HAP-1 (cell line): ENCODE measurements at regions of chr5 and their contacts with region 1.

Region 1: DNA sequence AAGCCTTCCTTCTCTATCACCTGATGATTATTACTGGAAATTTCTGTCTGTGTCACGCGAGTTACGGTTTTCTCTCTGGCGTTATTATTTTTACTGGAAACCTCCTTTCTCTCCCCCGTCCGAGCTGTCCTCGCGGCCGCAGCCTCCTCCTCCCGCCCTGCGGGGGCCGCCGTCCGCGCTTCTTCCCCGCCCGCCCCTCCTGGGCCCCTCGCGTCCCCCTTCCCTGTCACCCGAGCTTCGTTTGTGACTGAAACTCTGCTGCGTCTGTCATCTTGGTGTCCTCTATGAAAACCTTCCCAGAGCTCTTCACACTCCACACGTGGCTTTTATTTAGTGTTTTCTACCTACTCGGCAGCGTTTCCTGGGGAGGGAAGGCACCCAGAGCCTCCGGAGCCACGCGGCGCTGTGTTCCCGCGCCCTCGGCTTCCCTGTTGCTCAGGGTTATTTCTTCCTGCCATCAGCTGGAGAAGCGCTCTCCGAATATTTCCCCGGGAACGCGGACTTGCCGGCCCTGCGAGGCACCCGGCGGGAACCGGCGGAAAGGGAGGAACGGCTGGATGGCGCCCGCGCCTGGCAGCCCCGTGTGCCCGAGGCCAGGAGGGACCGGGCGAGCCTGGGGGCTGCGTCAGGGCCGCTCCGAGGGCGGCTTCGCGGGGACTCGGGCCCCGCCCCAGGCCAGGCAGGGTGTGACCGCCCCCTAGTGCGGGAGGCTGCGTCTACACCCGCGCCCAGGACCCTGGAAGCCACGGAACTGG is 33.9 kb downstream of the TRIP13 start:
- DNase-seq: no peak
- H3K4me3 ChIP-seq: no peak overlapping the region
- H3K4me1 ChIP-seq: no peaks in the 10 kb centered on the region
- H3K27me3 ChIP-seq: no peaks in the 10 kb centered on the region

Region 2: DNA sequence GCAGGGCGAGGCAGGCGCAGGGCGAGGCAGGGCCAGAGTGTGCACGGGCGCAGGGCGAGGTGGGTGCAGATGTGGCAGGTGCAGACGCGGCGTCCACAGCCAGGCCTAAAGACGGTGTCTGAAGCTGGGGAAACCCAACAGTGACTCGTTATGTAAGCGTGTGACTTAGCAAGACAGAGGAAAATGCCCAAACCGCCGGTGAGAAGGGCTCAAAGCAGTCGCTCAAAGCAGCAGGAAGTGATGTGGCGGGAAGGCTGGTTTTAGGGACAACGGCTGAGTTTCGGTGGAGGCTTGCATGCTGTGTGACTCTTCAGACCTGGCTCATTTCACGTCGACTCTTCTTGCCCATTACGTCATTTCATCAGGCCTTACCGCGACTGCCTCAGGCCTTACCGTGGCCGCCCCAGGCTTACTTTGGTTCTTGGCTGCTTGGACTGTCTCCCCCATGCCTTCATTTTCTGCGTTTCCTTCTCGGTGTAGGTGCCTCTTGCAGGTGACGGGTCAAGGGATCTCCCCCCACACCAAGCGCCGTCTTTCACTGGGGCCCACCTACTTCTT is 534.1 kb before region 1 on chr5:
- in situ Hi-C with region 1: no loop called
- DNase-seq: no peak
- H3K4me3 ChIP-seq: no peak overlapping the region
- H3K4me1 ChIP-seq: no peaks in the 10 kb centered on the region
- H3K27me3 ChIP-seq: no peaks in the 10 kb centered on the region

Region 3: DNA sequence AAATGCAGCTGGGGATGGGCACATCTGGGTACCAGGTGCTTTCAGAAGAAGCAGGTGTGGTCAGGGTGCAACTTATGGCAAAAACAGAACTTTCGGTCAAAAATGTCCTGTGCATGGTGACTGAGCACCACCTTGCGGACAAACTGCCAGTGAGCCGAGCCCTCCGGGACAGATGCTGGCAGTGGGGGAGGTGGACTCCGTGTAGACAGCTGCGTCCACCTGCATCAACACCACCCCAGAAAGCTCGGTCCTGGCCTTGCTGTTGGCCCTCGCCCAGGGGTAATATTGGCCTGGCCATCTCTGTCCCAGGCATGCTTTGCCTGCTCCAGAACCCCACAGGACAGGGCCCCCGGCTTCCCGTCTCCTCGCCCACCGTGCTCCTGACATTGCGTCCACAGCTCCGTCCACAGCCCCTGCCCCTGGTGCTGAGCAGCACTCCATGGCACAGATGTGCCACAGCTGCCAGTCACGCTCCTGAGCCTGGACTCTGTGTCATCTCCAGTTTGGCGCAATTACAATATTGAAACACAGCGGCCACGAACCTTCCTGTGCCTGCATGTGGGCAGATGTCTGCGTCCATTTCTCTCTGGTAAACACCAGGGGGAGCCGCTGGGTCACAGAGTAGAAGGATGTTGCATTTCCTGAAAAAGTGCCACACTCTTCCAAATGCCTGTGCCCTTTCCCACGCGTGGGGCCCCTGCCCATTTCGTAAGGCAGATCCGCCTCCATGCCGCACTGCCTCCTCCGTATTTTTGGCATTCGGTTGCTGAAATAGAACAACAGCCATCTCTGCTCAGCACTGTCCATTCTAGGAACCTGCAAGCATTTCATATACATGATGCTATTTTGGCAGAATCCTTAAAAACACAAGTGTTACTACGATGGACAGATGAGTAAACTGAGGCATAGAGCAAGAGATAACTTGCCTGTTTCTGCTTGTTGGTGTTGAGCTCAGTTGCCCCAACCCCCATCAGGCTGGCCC is 241.4 kb after region 1 on chr5:
- in situ Hi-C with region 1: loop called (anchors 25 kb)
- DNase-seq: peak; percentile 55 to 83
- H3K4me3 ChIP-seq: peak overlapping the region; percentile 29
- H3K4me1 ChIP-seq: no peaks in the 10 kb centered on the region; the same call in 1 of the 2 replicates
- H3K27me3 ChIP-seq: no peaks in the 10 kb centered on the region

Region 4: DNA sequence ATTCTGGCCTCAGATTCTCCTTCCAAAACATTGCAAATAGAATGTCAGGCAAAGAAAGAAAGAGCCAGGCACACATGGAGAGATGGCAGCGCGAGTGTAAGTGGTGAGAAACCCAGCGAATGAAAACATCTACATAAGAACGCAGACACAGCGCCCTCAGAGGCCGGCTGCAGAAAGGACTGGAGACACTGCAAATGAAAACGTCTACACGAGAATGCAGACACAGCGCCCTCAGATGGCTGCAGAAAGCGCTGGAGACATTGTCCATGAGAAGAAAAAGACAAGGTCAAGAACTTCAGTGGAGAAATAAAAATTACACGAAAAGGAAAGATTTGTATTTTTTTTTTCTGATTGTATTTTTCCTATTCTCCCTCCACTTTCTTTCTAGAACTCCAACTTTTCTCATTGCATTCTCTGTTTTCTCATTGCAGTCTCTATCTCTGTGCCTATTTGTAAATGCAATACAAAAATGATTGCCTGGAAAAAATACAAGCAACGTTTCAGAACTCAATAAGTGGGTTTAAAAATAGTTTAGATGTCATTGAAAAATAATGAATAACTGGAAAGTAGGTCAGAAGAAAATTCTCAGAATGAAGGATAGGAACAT is 715.1 kb after region 1 on chr5:
- in situ Hi-C with region 1: loop called (anchors 25 kb)
- DNase-seq: peak; percentile 87
- H3K4me3 ChIP-seq: no peak overlapping the region
- H3K4me1 ChIP-seq: no peaks in the 10 kb centered on the region
- H3K27me3 ChIP-seq: 0 out of 2 replicates have a peak, but pooled peaks cover 5% of the 10 kb centered on the region